Gastrocnemius medialis (tissue), 4 donors: ENCODE measurements at regions of chr22 and their contacts with region 1.

Region 1: GRCh38 chr22:39431821-39432251 is 25.0 kb upstream of the MGAT3 start:
- DNase-seq: peak; percentile 36 to 75
- ATAC-seq: peak; percentile 93 to 97
- H3K4me3 ChIP-seq: peak overlapping the region in 1 of 4 donors; percentile 15
- H3K27ac ChIP-seq: peak overlapping the region; percentile 89 to 93 (median 91)
- H3K4me1 ChIP-seq: peaks cover 31 to 43% of the 10 kb centered on the region in 2 donors
- H3K27me3 ChIP-seq: no peaks in the 10 kb centered on the region
- CTCF ChIP-seq: no peak
- POLR2A ChIP-seq: no peak

Region 2: DNA sequence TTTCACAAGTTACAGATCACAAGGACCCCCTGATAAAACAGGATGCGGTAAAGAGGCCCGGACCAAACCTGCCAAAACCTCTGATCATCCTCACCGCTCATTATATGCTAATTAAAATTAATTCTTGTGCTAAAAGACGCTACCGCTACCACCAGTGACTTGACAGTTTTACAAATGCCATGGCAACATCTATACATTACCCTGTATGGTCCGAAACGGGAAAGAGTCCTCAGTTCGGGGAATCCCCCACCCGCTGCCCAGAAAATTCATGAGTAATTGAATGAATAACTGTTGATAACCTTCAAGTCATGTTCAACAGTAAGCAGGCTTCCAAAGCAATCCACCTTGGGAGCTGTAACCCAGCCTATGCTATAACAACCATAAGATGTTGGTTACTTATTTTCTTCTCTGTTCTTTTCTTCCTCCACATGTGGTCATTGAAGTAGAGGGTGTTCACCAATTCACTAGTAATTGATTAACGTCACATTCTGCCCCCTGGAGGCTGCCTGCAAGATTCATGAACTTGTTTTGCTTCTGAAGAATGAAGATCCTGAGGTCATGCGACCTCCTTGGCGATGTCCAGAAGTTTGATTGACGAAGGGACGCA is 314.1 kb before region 1 on chr22:
- in situ Hi-C with region 1: no loop called
- intact Hi-C with region 1: no loop called
- DNase-seq: no peak
- ATAC-seq: no peak
- H3K4me3 ChIP-seq: no peak overlapping the region
- H3K27ac ChIP-seq: no peak overlapping the region
- H3K4me1 ChIP-seq: no peaks in the 10 kb centered on the region
- H3K27me3 ChIP-seq: peaks cover 24 to 45% (median 39%) of the 10 kb centered on the region in 3 donors
- CTCF ChIP-seq: peak in 1 of 5 experiments; percentile 7
- POLR2A ChIP-seq: no peak

Region 3: DNA sequence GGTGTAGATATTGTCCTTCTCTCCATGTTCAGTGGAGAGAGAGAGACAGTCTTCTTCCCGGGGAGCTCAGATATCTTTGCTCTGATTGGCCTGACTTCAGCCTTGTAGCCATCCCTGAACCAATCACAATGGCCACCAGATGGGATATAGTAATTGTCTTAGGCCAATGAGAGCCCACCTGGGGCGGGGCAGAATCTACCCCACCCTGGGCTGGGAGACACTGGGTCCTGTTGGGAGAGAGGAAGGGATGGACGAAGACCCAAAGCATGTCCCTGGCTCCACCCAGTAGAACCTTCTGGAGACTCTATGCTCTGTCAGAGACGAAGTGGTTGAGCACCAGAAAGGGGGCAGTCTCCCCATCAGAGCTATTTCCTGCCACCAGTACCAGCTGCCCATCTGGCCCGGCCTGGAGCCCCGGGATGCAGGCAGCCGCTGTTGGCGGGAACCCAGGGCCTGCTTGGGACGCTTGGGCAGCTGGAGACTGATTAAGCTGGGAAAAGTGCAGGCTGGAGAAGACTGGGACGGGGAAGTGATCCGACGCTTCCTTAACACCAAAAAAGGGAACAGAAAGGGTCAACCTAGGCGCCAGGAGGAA is 247.7 kb before region 1 on chr22:
- in situ Hi-C with region 1: no loop called
- intact Hi-C with region 1: no loop called
- DNase-seq: no peak
- ATAC-seq: peak; percentile 55 to 81
- H3K4me3 ChIP-seq: no peak overlapping the region
- H3K27ac ChIP-seq: peak overlapping the region; percentile 33 to 75 (median 66)
- H3K4me1 ChIP-seq: peaks cover 11 to 19% of the 10 kb centered on the region in 2 donors
- H3K27me3 ChIP-seq: no peaks in the 10 kb centered on the region
- CTCF ChIP-seq: no peak
- POLR2A ChIP-seq: no peak

Region 4: DNA sequence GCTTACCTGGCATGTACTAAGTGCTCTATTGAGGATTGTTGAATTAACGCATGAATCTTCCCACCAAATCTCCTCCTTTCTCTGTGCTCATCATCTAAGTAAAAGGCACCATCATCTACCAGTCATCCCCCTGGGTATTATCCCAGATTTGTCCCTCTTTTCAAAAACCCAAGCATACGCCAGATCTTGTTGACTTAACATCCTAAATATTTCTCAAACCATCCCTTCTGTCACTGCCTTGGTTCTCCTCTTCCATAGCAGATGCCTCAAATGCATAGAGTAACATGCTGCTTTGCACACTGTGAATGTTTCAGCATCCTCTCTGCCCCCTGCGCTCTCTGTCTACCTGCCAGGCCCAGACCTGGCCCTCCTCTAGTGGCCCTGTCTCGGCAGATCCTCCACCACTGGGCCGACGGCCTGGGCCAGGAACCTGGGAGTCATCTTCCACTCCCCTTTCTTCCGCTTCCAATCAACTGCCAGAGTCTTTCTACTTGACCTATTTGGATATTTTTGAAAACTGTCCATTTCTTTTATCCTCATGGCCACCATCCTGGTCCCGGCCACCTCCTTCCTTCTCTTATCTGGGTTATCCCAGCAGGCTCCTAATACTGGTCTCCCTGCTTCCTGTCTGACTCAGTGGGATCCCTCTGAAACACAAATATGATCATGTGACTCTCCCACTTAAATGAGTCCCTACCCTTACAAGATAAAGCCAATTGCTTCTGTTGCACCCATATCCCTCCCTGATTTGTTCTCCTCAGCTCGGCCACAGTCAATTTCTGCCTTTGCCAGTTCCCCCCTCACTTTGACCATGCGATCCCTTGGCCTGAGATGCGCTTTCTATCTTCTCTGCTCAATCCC is 35.7 kb before region 1 on chr22:
- in situ Hi-C with region 1: no loop called
- intact Hi-C with region 1: loop called (anchors 5 kb)
- DNase-seq: no peak
- ATAC-seq: no peak
- H3K4me3 ChIP-seq: no peak overlapping the region
- H3K27ac ChIP-seq: no peak overlapping the region
- H3K4me1 ChIP-seq: peaks cover 10% of the 10 kb centered on the region in 2 donors
- H3K27me3 ChIP-seq: no peaks in the 10 kb centered on the region
- CTCF ChIP-seq: no peak
- POLR2A ChIP-seq: no peak